Calu3 (cell line): ENCODE measurements at regions of chr16 and their contacts with region 1.

Region 1: GRCh38 chr16:20372701-20373100 is 20.2 kb upstream of the UMOD start:
- DNase-seq: no peak
- H3K4me3 Mint-ChIP-seq: no peak overlapping the region
- H3K27ac Mint-ChIP-seq: no peak overlapping the region
- H3K4me1 Mint-ChIP-seq: no peaks in the 10 kb centered on the region
- H3K27me3 Mint-ChIP-seq: peaks cover 94% of the 10 kb centered on the region
- CTCF ChIP-seq: no peak

Region 2: DNA sequence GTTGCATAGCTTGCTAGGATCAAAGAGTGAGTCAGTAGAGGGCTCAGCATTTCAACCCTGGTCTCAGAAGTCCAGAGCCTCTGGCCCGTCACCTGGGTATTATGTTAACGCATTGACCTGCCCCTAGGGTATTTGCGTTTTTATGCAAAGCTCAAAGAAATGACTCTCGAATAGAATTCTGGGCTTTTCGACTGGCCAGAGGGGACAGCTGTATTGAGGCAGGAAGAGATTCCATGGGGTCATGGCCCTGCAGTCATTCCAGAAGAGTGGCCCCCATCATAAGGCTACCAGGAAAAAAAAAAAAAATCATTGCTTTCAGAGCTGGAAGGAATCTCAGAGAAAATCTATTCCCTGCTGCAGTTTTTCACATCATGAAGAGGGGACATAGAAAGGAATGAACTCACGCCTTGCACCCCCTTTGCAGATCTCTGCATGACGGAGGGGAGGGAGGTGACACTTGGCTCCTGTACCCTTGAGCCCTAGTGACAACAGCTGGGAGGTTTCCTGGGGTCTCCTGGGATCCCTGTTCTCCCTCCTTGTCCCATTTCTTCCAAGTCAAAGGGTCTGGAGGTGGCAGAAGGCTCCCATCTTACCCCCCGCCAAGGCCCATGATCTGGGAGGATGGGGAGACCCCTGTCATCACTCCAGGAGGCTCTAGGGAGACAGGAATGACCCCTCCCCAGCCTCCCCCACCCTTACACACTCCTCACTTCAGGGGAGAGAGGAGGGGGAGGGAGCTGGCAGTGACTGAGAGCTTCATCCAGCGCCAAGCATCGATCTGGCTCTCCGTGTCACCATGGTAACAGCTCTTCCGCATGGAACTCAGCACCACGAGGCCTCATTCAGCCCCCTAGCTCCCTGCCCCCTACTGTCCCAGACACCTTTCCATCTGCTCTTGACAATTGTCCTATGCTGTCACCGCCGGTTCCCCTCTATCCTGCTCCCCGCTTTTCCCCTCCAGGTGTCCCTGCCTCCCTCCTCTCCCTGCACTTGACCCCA is 81.2 kb before region 1 on chr16:
- CTCF ChIA-PET with region 1: no interaction called
- intact Hi-C with region 1: no loop called
- DNase-seq: no peak
- H3K4me3 Mint-ChIP-seq: no peak overlapping the region
- H3K27ac Mint-ChIP-seq: no peak overlapping the region
- H3K4me1 Mint-ChIP-seq: no peaks in the 10 kb centered on the region
- H3K27me3 Mint-ChIP-seq: peaks cover 66% of the 10 kb centered on the region
- CTCF ChIP-seq: no peak

Region 3: DNA sequence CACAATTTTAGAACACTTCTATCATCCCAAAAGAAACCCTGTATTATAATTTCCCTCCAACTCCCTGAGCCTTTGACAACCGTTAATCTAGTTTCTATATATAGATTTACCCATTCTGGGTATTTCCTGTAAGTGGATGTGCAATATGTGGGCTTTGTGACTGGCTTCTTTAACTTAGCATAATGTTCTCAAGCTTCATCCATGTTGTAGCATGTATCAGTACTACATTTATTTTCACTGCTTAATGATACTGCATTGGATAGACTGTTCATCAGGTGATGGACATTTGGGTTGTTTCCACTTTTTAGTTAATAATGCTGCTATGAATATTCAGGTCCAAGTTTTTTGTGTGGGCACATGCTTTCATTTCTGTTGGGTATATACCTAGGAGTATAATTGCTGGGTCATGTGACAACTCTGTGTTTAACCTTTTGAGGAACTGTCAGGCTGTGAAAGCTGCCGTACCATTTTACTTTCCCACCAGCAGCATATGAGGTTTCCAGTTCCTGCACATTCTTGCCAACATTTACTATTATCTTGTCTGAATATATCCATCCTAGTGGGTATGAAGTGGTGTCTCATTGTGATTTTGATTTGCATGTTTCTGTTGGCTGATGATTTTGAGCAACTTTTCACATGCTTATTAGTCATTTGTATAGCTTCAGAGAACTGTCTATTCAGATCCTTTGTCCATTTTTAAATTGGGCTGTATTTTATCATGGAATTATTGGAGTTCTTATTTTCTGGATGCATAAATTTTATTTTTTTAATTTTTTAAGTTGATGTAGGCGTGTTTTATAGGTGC is 450.0 kb after region 1 on chr16:
- CTCF ChIA-PET with region 1: interaction called, 10 read pairs
- intact Hi-C with region 1: no loop called
- DNase-seq: no peak
- H3K4me3 Mint-ChIP-seq: no peak overlapping the region
- H3K27ac Mint-ChIP-seq: no peak overlapping the region
- H3K4me1 Mint-ChIP-seq: no peaks in the 10 kb centered on the region
- H3K27me3 Mint-ChIP-seq: no peaks in the 10 kb centered on the region
- CTCF ChIP-seq: no peak